H1 (cell line): ENCODE measurements at regions of chr1 and their contacts with region 1.

Region 1: GRCh38 chr1:234499119-234499942 is 20.4 kb upstream of the TARBP1 start:
- DNase-seq: peak in 1 of 2 experiments; percentile 96
- H3K4me3 ChIP-seq: no peak overlapping the region
- H3K27ac ChIP-seq: no peak overlapping the region
- H3K4me1 ChIP-seq: peaks cover 0 to 3% (median 0%) of the 10 kb centered on the region in 4 experiments; a peak in 2 of 7 replicates
- H3K27me3 ChIP-seq: no peaks in the 10 kb centered on the region
- CTCF ChIP-seq: peak; percentile 85 to 92 (median 91)
- EP300 ChIP-seq: no peak
- POLR2A ChIP-seq: no peak
- RAD21 ChIP-seq: peak; percentile 98 to 99

Region 2: GRCh38 chr1:234478481-234479309 is 20.6 kb before region 1 on chr1 and contains the start of gene TARBP1:
- CTCF ChIA-PET with region 1: no interaction called
- POLR2A ChIA-PET with region 1: no interaction called
- DNase-seq: peak; percentile 27 to 82
- H3K4me3 ChIP-seq: peak within 1 kb of the TSS; percentile 54 to 76 (median 72)
- H3K27ac ChIP-seq: peak within 1 kb of the TSS; percentile 83; the same call in 1 of the 2 replicates
- H3K4me1 ChIP-seq: peaks cover 3 to 17% (median 11%) of the 10 kb centered on the region in 4 experiments
- H3K27me3 ChIP-seq: peaks cover 0 to 4% (median 1%) of the 10 kb centered on the region in 4 experiments; a peak in 5 of 7 replicates
- CTCF ChIP-seq: no peak
- EP300 ChIP-seq: no peak
- POLR2A ChIP-seq: peak in 1 of 2 experiments; percentile 66; a peak in 1 of 3 replicates
- RAD21 ChIP-seq: no peak
- total RNA-seq, gene TARBP1: 18.6 and 21.9 TPM in 2 replicates

Region 3: GRCh38 chr1:234509452-234510328 is 10.4 kb after region 1 on chr1:
- CTCF ChIA-PET with region 1: interaction called, 19 read pairs
- POLR2A ChIA-PET with region 1: interaction called, 3 read pairs
- DNase-seq: no peak
- H3K4me3 ChIP-seq: no peak overlapping the region
- H3K27ac ChIP-seq: no peak overlapping the region
- H3K4me1 ChIP-seq: peaks cover 2 to 15% (median 9%) of the 10 kb centered on the region in 4 experiments; a peak in 5 of 7 replicates
- H3K27me3 ChIP-seq: no peaks in the 10 kb centered on the region
- CTCF ChIP-seq: no peak
- EP300 ChIP-seq: no peak
- POLR2A ChIP-seq: no peak
- RAD21 ChIP-seq: no peak

Region 4: DNA sequence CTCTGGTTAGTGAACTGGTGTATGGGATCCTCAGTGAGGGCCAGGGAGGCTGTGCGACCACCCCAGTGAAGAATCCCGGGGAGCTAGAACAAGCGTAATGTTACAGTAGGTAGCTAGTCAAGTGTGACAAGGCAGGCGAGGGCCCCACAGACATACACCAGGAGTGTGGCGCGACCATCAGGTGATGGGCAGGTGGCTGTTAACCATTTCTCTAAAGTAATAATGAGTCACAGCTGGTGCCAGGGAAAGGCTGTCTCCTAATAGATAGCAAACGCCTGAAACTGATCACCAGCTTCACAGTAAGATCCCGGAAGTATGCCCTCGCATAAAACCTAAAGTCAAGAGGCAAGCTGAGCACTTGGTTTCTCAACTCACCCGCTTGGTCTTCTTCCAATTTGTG is 20.2 kb after region 1 on chr1:
- CTCF ChIA-PET with region 1: interaction called, 17 read pairs
- POLR2A ChIA-PET with region 1: interaction called, 3 read pairs
- DNase-seq: no peak
- H3K4me3 ChIP-seq: no peak overlapping the region
- H3K27ac ChIP-seq: no peak overlapping the region
- H3K4me1 ChIP-seq: peaks cover 0 to 13% (median 3%) of the 10 kb centered on the region in 4 experiments; a peak in 3 of 7 replicates
- H3K27me3 ChIP-seq: no peaks in the 10 kb centered on the region
- CTCF ChIP-seq: no peak
- EP300 ChIP-seq: no peak
- POLR2A ChIP-seq: no peak
- RAD21 ChIP-seq: no peak

Region 5: DNA sequence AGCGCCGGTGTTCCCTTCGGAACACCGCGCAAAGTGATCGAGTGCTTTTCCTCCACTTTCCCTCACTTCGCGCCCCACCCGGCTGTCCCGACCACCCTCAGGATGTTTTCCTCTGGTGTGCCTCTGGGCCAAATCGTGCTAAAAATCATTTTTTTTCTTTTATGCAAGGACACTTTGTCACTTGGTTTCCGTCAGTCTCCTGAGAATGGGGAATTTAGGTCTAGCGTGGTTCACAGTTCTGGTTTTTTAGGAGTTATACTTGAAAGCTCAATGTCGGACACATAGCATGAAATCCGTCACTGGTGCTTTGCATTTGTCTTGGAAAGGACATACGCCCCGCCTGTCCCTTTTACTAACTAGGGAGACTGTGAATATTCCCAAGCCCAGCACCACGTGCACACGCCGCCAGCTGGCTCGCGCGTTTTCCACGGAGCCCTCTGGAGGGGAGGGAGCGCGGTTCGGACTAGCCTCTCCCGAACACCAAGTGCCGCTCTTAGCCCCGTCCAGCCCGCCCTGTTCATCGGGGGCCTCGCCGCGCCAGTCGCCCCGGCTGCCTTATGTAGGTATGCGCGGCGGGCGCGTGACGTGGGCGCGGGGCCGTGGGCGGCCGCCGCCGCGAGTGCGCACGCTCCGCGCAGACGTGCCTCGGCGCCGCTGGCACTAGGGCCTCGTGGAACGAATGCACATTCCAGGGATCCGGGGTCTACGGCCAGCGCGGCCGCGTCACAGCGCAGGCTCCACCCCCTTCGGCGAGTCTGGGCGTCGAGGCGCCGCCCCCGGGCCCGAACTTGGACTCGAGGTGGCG is 111.2 kb after region 1 on chr1:
- CTCF ChIA-PET with region 1: interaction called, 11 read pairs
- POLR2A ChIA-PET with region 1: interaction called, 6 read pairs
- DNase-seq: peak; percentile 43 to 93
- H3K4me3 ChIP-seq: peak overlapping the region; percentile 73 to 98 (median 82)
- H3K27ac ChIP-seq: peak overlapping the region; percentile 89
- H3K4me1 ChIP-seq: peaks cover 14 to 33% (median 23%) of the 10 kb centered on the region in 4 experiments
- H3K27me3 ChIP-seq: no peaks in the 10 kb centered on the region
- CTCF ChIP-seq: no peak
- EP300 ChIP-seq: no peak; a peak in 1 of 3 replicates
- POLR2A ChIP-seq: peak; percentile 68 to 84
- RAD21 ChIP-seq: no peak

Region 6: GRCh38 chr1:234621127-234621468 is 121.8 kb after region 1 on chr1:
- CTCF ChIA-PET with region 1: no interaction called
- POLR2A ChIA-PET with region 1: no interaction called
- DNase-seq: no peak
- H3K4me3 ChIP-seq: no peak overlapping the region
- H3K27ac ChIP-seq: no peak overlapping the region
- H3K4me1 ChIP-seq: peaks cover 0 to 12% (median 5%) of the 10 kb centered on the region in 4 experiments; a peak in 3 of 7 replicates
- H3K27me3 ChIP-seq: no peaks in the 10 kb centered on the region
- CTCF ChIP-seq: no peak
- EP300 ChIP-seq: no peak
- POLR2A ChIP-seq: no peak
- RAD21 ChIP-seq: no peak

Region 7: GRCh38 chr1:234631721-234632125 is 132.4 kb after region 1 on chr1:
- CTCF ChIA-PET with region 1: no interaction called
- POLR2A ChIA-PET with region 1: no interaction called
- DNase-seq: no peak
- H3K4me3 ChIP-seq: no peak overlapping the region
- H3K27ac ChIP-seq: no peak overlapping the region
- H3K4me1 ChIP-seq: no peaks in the 10 kb centered on the region
- H3K27me3 ChIP-seq: no peaks in the 10 kb centered on the region
- CTCF ChIP-seq: no peak
- EP300 ChIP-seq: no peak
- POLR2A ChIP-seq: no peak
- RAD21 ChIP-seq: no peak

Region 8: DNA sequence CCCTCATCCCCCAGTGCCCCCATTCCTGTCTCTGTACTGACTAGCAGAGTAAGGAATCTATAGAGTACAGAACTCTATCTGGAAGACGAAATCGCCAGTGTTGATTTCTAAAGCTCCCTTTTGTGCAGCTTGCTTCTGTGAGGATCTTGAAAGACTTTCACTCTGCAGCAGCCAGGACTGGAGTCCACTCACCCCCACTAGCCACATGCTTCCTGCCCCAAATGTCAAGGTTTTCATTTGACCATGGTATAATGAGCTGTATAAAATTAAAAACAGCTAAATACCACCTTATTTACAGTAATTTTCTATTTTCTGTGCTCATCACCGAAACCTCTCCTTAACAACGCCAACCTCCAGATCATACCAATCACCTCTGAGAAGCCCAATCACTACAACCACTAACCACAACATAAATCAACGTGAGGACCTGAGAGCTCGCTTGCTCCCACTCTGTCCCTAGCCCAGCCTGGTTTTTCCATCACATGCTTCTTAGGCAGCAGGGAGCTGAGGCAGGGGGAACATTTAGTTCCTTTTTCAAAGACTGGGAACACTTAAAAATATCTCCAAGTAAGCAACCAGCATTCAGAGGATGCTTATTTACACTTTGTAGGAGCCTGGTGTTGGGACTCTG is 166.8 kb after region 1 on chr1:
- CTCF ChIA-PET with region 1: no interaction called
- POLR2A ChIA-PET with region 1: no interaction called
- DNase-seq: no peak
- H3K4me3 ChIP-seq: no peak overlapping the region
- H3K27ac ChIP-seq: no peak overlapping the region
- H3K4me1 ChIP-seq: no peaks in the 10 kb centered on the region; a peak in 1 of 7 replicates
- H3K27me3 ChIP-seq: no peaks in the 10 kb centered on the region
- CTCF ChIP-seq: no peak
- EP300 ChIP-seq: no peak
- POLR2A ChIP-seq: no peak
- RAD21 ChIP-seq: no peak

Region 9: GRCh38 chr1:235077571-235078479 is 578.5 kb after region 1 on chr1:
- CTCF ChIA-PET with region 1: interaction called, 27 read pairs
- POLR2A ChIA-PET with region 1: no interaction called
- DNase-seq: no peak
- H3K4me3 ChIP-seq: no peak overlapping the region
- H3K27ac ChIP-seq: no peak overlapping the region
- H3K4me1 ChIP-seq: peaks cover 0 to 6% (median 2%) of the 10 kb centered on the region in 4 experiments; a peak in 3 of 7 replicates
- H3K27me3 ChIP-seq: no peaks in the 10 kb centered on the region
- CTCF ChIP-seq: no peak
- EP300 ChIP-seq: no peak
- POLR2A ChIP-seq: no peak
- RAD21 ChIP-seq: no peak

Region 10: DNA sequence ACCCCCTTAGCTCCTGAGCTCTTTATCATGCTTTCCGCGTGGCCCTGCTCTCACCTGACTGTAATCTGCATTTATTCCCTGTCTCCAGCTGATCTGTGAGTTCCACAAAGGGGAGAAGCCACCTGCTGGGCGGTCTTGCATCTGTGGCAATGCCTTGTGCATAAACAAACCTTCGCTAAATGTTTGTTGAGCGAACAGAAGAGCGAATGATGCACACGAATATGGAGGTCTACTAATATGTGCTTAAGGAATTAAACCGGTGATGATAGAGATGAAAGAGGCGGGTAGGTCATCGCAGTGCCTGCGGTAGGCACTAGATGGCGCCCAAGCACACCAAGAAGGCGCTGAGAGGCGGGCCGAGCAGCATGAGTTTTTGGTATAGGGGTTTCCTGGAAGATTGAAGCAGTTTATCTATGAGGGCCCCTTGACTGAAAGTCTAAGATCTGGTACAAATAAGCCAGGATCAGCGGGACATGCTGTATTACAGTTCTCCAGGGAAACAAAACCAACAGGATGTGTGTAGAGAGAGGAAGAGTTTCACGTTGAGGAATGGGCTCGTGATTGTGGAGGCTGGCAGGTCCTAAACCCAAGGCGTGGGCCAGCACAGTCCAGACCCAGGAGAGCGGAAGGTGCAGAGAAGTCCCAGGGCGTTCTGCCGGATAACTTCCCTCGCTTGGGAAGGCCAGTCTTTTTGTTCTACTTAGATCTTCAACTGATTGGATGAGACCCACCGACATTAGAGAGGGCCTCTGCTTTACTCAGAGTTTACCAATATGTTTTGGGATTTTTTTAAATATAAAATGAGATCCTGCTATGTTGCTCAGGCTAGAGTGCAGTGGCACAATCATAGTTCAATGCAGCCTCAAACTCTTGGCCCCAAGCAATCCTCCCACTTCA is 594.6 kb after region 1 on chr1:
- CTCF ChIA-PET with region 1: interaction called, 13 read pairs
- POLR2A ChIA-PET with region 1: interaction called, 3 read pairs
- DNase-seq: peak in 1 of 2 experiments; percentile 95
- H3K4me3 ChIP-seq: peak overlapping the region in 3 of 4 experiments; percentile 20 to 46 (median 33); a peak in 5 of 8 replicates
- H3K27ac ChIP-seq: no peak overlapping the region
- H3K4me1 ChIP-seq: peaks cover 2 to 24% (median 20%) of the 10 kb centered on the region in 4 experiments
- H3K27me3 ChIP-seq: no peaks in the 10 kb centered on the region
- CTCF ChIP-seq: peak; percentile 72 to 88 (median 85)
- EP300 ChIP-seq: no peak
- POLR2A ChIP-seq: no peak
- RAD21 ChIP-seq: peak; percentile 79 to 82